Ovary (tissue), 10 donors: ENCODE measurements at regions of chrX and their contacts with region 1.

Region 1: GRCh38 chrX:154019633-154020528 is at the start of gene IRAK1:
- DNase-seq: peak; percentile 57 to 78 (median 65)
- H3K4me3 ChIP-seq: peak within 1 kb of the TSS; percentile 48
- H3K27ac ChIP-seq: peak within 1 kb of the TSS; percentile 66 to 80
- H3K4me1 ChIP-seq: no peaks in the 10 kb centered on the region
- H3K27me3 ChIP-seq: no peaks in the 10 kb centered on the region
- CTCF ChIP-seq: no peak
- EP300 ChIP-seq: no peak
- POLR2A ChIP-seq: no peak
- total RNA-seq, gene IRAK1: 17.0 to 97.4 (median 52.6) TPM

Region 2: GRCh38 chrX:153750127-153750774 is 269.6 kb before region 1 on chrX:
- intact Hi-C with region 1: no loop called
- DNase-seq: no peak
- H3K4me3 ChIP-seq: no peak overlapping the region
- H3K27ac ChIP-seq: no peak overlapping the region
- H3K4me1 ChIP-seq: no peaks in the 10 kb centered on the region
- H3K27me3 ChIP-seq: no peaks in the 10 kb centered on the region
- CTCF ChIP-seq: no peak
- EP300 ChIP-seq: no peak
- POLR2A ChIP-seq: no peak

Region 3: DNA sequence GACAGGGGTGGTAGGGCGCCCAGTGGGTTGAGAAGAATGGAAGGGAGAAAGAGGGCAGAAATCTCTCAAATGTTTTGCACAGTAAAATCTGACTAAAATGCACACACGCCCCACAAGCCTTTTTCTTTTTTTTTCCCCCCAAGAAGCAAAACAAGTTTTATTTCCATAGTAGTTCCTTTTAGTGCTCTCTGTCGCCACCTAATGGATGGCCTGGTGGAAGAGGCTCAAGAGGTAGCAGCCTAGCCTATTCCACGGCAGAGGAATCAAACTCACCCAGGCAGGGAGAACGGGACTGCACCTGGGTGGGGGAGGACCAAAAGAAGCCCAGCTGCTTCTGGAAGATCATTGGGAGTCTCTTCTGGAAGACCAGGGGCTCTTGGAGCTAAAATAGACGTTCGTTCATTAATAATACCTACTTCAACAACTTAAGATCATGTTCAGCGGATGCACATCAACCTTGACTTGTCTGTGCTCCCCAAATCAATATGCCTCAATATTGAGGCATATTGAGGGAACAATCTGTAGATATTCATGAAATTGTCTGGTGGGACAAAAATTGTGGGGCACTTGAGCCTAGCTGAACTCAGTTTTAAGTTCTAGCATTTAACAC is 31.4 kb after region 1 on chrX:
- intact Hi-C with region 1: loop called in 1 of 4 experiments (anchors 5 kb)
- DNase-seq: peak; percentile 74 to 86 (median 79)
- H3K4me3 ChIP-seq: no peak overlapping the region
- H3K27ac ChIP-seq: no peak overlapping the region
- H3K4me1 ChIP-seq: peaks cover 25% of the 10 kb centered on the region
- H3K27me3 ChIP-seq: no peaks in the 10 kb centered on the region
- CTCF ChIP-seq: peak; percentile 16 to 51 (median 27)
- EP300 ChIP-seq: no peak
- POLR2A ChIP-seq: no peak

Region 4: DNA sequence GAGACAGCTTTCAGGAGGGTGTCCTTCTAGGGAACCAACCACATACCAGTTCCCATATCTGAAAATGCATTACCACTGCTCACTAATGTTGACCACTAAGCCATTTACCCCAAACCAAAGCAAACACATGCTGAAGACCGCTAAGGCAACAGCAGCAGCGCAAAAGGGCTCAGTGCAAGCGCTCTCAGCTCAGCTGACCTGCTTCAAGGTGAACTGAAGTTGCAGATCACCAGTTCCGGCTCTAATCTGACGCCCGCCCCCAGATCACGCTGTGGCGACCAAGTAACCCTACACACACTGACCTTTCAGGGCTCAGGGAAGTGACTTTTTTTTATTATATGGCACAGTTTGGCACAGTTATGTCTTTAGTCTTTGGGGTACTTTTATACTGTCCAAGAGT is 71.8 kb after region 1 on chrX:
- intact Hi-C with region 1: loop called in 1 of 4 experiments (anchors 5 kb)
- DNase-seq: no peak
- H3K4me3 ChIP-seq: no peak overlapping the region
- H3K27ac ChIP-seq: no peak overlapping the region
- H3K4me1 ChIP-seq: peaks cover 5% of the 10 kb centered on the region
- H3K27me3 ChIP-seq: no peaks in the 10 kb centered on the region
- CTCF ChIP-seq: no peak
- EP300 ChIP-seq: no peak
- POLR2A ChIP-seq: no peak